Panc1 (cell line): ENCODE measurements at regions of chr12 and their contacts with region 1.

Region 1: GRCh38 chr12:119594772-119595445 is 1.3 kb downstream of the TMEM233 start:
- DNase-seq: no peak
- ATAC-seq: peak; percentile 84
- H3K4me3 ChIP-seq: peak overlapping the region; percentile 38 to 59
- H3K27ac ChIP-seq: no peak overlapping the region
- H3K4me1 ChIP-seq: peaks cover 8% of the 10 kb centered on the region; the same call in 1 of the 2 replicates
- H3K27me3 ChIP-seq: peaks cover 48% of the 10 kb centered on the region
- CTCF ChIP-seq: no peak

Region 2: DNA sequence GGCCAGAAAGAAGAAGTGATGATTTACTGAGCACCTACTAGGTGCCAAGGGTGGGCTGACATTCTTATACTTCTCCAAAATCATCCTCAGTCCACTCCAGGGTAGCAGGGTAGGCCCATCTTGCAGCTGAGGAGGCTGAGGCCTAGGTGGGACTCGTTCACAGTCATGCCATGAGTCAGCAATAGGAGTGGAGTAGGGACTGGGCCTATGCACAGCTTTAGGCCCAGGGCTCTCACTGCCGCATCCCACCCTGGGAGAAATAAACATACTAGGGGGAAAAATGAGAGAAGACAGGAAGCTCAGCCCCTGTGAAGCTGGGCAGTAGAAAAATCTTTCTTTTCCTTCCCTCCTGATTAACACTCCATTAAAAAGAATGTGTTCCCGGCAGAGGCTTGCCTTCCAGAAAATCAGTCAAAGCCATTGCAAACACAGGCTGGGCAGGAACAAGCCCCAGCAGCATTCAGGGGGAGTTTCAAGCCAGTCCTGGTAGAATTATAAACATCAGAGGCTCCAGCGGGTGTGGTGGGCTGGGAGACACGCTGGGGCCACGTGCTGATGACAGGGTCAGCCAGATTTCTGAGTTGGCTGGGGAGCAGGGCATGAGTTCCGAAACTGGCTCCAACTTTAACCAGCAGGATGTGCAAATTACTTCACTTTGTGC is 414.4 kb before region 1 on chr12:
- CTCF ChIA-PET with region 1: no interaction called
- POLR2A ChIA-PET with region 1: no interaction called
- in situ Hi-C with region 1: no loop called
- intact Hi-C with region 1: no loop called
- DNase-seq: no peak
- ATAC-seq: no peak
- H3K4me3 ChIP-seq: peak overlapping the region in 1 of 2 experiments; percentile 72; a peak in 2 of 4 replicates
- H3K27ac ChIP-seq: peak overlapping the region; percentile 55
- H3K4me1 ChIP-seq: peaks cover 16% of the 10 kb centered on the region
- H3K27me3 ChIP-seq: no peaks in the 10 kb centered on the region; the same call in 1 of the 2 replicates
- CTCF ChIP-seq: no peak

Region 3: DNA sequence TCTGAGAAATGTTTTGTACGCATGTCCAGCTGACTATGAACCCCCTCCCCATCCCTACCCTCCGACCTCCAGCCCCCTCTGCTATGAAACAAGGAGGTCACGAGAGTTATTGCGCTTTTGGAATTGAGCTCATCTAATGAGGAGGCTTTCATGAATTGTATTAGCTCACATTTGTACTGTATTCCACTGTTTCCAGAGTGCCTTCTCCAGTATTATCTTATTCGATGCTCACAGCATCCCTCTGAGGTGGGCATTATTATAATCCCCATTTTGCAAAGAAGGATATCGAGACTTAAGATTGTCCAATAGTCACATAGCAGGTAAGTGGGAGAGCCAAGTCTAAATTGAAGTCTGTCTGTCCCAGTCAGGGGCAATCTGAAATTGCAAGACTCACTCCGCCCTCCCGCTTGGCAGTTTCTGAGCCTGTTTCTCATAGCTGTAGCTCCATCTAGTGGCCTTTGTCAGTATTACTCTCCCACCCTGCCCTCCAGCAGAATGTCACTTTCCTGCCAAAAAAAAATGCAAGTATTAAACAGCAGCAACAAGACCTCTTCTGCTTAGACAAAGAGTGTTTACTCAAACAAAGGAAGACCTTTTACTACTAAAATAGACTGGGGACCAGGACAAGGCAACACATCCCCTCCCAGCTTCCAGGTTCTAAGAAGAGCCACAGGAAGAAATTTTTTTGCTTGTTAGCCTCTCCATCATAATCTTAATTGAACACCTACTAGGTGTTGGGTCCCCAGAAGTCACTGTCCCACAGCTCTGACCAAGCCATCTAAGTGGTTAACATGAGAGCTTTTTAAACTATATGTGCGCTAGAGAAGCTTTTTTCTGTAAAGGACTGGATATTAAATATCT is 49.9 kb before region 1 on chr12:
- CTCF ChIA-PET with region 1: no interaction called
- POLR2A ChIA-PET with region 1: interaction called, 10 read pairs
- in situ Hi-C with region 1: no loop called
- intact Hi-C with region 1: no loop called
- DNase-seq: peak; percentile 59
- ATAC-seq: peak; percentile 93
- H3K4me3 ChIP-seq: no peak overlapping the region
- H3K27ac ChIP-seq: no peak overlapping the region
- H3K4me1 ChIP-seq: no peaks in the 10 kb centered on the region
- H3K27me3 ChIP-seq: 0 out of 2 replicates have a peak, but pooled peaks cover 4% of the 10 kb centered on the region
- CTCF ChIP-seq: peak; percentile 85